ENCODE measurements at regions of chr3 and their contacts with region 1.

Region 1: DNA sequence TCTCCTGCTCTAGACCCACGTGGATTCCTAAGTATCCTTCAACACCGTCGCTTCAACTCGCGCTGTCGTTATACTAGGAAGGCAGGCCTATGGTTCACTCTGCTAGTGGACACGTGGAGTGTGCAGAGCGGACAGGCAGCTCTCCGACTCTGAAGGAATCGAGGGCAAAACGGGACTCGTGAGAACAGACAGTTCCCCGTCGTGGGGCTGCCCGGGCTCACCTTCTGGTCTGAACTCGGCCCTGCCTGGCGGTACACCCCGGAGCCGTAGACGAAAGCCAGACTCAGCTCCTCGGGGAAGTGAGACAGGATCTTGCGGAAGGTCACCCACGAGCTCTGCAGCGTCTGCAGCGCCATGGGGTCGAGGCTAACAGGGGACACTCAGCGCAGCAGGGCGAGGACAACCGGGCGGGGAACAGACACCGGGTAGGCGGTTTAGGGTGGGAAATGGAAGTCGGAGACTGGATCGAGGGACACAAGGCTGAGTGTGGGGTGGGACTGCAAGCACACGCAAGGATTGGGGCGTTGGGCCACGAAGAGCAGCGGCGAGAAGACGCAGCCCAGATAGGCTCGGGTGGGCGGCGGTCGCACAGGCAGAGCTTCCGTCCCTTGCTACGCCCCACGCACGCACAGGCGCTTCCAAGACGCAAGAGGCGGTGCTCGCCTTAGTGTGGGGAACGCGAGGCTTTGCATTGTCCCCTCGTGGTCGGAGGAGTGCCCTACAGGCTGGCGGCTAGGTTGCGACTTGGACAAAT is at the start of gene TAMM41:
- DNase-seq: peak; percentile 88
- H3K4me3 ChIP-seq: peak within 1 kb of the TSS; percentile 87
- H3K27ac ChIP-seq: peak within 1 kb of the TSS; percentile 53 to 86
- H3K4me1 ChIP-seq: peaks cover 0 to 9% of the 10 kb centered on the region in 2 experiments; a peak in 3 of 4 replicates
- H3K27me3 ChIP-seq: no peaks in the 10 kb centered on the region; the same call in 1 of the 2 replicates
- CTCF ChIP-seq: peak; percentile 68
- EP300 ChIP-seq: 0 out of 4 replicates have a peak, but pooled peaks of 1 of the 2 experiments have one; percentile 34
- RAD21 ChIP-seq: peak; percentile 46
- polyA plus RNA-seq, gene TAMM41: 14.3 and 16.6 TPM in 2 replicates

Region 2: GRCh38 chr3:11591391-11592282 is 254.8 kb before region 1 on chr3:
- CTCF ChIA-PET with region 1: no interaction called
- POLR2A ChIA-PET with region 1: no interaction called
- DNase-seq: no peak
- H3K4me3 ChIP-seq: 0 out of 4 replicates have a peak overlapping the region, but pooled peaks of 1 of the 2 experiments have one; percentile 21
- H3K27ac ChIP-seq: peak overlapping the region; percentile 67 to 75
- H3K4me1 ChIP-seq: peaks cover 39 to 44% of the 10 kb centered on the region in 2 experiments
- H3K27me3 ChIP-seq: no peaks in the 10 kb centered on the region
- CTCF ChIP-seq: no peak
- EP300 ChIP-seq: peak; percentile 6 to 25; a peak in 1 of 4 replicates
- RAD21 ChIP-seq: no peak

Region 3: DNA sequence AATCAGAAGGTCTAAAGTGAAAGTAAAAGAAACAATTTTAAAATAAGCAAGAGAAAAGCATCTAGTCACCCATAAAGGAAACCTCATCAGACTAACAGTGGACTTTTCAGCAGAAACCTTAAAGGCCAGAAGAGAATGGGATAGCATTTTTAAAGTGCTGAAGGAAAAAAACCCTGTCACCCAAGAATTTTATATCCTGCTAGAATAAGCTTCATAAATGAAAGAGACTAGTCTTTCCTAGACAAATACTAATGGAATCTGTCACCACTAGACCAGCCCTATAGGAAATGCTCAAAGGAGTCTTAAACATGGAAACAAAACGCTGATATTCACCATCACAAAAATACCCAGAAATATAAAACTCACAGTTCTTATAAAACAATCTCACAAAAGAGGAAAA is 46.7 kb before region 1 on chr3:
- CTCF ChIA-PET with region 1: no interaction called
- POLR2A ChIA-PET with region 1: no interaction called
- DNase-seq: no peak
- H3K4me3 ChIP-seq: no peak overlapping the region
- H3K27ac ChIP-seq: no peak overlapping the region
- H3K4me1 ChIP-seq: no peaks in the 10 kb centered on the region
- H3K27me3 ChIP-seq: no peaks in the 10 kb centered on the region
- CTCF ChIP-seq: no peak
- EP300 ChIP-seq: no peak
- RAD21 ChIP-seq: no peak

Region 4: GRCh38 chr3:11835028-11835639 is 11.3 kb before region 1 on chr3:
- CTCF ChIA-PET with region 1: interaction called, 12 read pairs
- POLR2A ChIA-PET with region 1: interaction called, 5 read pairs
- DNase-seq: peak; percentile 44
- H3K4me3 ChIP-seq: no peak overlapping the region
- H3K27ac ChIP-seq: no peak overlapping the region
- H3K4me1 ChIP-seq: no peaks in the 10 kb centered on the region
- H3K27me3 ChIP-seq: no peaks in the 10 kb centered on the region
- CTCF ChIP-seq: peak; percentile 71
- EP300 ChIP-seq: no peak
- RAD21 ChIP-seq: peak; percentile 70

Region 5: GRCh38 chr3:11969986-11970385 is 123.5 kb after region 1 on chr3:
- CTCF ChIA-PET with region 1: no interaction called
- POLR2A ChIA-PET with region 1: no interaction called
- DNase-seq: no peak
- H3K4me3 ChIP-seq: no peak overlapping the region
- H3K27ac ChIP-seq: no peak overlapping the region
- H3K4me1 ChIP-seq: peaks cover 0 to 3% of the 10 kb centered on the region in 2 experiments; a peak in 1 of 4 replicates
- H3K27me3 ChIP-seq: no peaks in the 10 kb centered on the region
- CTCF ChIP-seq: no peak
- EP300 ChIP-seq: no peak
- RAD21 ChIP-seq: no peak

Measured in SK-N-SH (cell line).